ENCODE measurements at regions of chr9 and their contacts with region 1.

Region 1: DNA sequence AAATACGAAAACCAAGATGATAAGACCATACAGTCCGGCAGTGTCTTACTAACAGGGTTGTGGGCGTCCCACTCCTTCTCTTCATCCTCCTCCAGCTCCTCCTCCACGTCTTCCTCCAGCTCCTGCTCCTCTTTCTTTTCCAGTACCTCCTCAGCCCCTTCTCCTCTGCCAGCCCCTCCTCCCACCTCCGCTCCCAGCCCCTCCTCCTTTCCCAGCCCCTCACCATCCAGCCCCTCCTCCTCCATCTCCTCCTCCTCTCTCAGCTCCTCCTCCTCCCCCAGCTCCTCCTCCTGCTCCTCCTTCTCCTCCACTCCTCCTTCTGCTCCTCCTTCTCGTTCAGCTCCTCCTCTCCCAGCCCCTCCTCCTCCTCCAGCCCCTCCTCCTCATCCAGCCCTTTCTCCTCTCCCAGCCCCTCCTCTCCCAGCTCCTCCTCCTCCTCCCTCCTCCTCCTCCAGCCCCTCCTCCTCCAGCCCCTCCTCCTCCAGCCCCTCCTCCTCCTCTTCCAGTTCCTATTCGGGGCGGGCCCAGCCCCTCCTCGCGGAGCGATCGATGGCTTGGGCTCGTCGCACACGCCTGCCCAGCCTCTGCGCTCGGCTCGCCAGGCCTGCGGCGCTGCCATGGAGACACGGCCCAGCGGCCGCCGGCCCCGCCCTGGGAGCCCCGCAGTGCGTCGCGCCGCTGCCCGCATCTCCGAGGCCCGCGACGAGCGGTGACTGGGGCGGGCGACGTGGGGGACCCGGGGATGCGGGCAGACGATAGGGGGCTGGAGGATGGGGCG is at the start of gene BRD3OS:
- DNase-seq: peak; percentile 94
- H3K4me3 Mint-ChIP-seq: peak within 1 kb of the TSS; percentile 78
- H3K27ac Mint-ChIP-seq: peak within 1 kb of the TSS; percentile 22
- H3K4me1 Mint-ChIP-seq: peaks cover 11% of the 10 kb centered on the region
- H3K27me3 Mint-ChIP-seq: peaks cover 2% of the 10 kb centered on the region
- total RNA-seq, gene BRD3OS: 9.6 to 10.3 TPM

Region 2: GRCh38 chr9:134066913-134067851 is 42.2 kb after region 1 on chr9:
- CTCF ChIA-PET with region 1: interaction called, 4 read pairs
- POLR2A ChIA-PET with region 1: interaction called, 21 read pairs
- DNase-seq: peak; percentile 36
- H3K4me3 Mint-ChIP-seq: peak overlapping the region; percentile 81
- H3K27ac Mint-ChIP-seq: peak overlapping the region; percentile 58
- H3K4me1 Mint-ChIP-seq: peaks cover 22% of the 10 kb centered on the region
- H3K27me3 Mint-ChIP-seq: peaks cover 20% of the 10 kb centered on the region